ENCODE measurements at regions of chr2 and their contacts with region 1.

Region 1: DNA sequence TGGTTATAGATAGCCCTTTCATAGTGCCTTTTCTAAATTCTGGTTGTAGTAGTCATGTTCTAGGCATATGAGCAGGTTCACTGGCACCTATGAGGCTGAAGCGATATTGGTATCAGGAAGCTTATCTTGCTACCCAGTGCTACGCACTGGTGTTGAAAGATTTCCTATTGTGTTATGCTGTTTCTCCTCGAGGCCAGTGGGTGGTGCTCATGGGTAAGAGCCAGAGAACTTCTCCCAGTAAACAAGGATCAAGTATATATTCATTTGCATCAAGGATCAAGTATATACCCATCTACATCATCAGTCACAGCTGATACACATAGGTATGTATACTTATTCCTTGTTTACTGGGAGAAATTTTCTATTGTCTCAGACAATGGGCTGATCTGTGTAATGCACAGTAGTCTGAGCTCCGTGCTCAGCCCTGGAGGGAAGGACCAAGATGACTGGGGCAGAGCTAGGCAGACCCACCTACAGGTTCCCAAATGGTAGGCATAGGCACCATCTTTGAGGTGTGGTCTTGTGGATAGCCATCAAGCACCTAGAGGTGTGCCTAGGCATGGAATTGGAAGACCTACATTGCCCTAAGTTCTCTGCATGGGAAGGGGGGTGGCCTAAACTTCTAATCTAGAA is 101.2 kb upstream of the GALNT13 start:
- DNase-seq: peak in 26 of 42 donors; percentile 6 to 77 (median 32)

Region 2: DNA sequence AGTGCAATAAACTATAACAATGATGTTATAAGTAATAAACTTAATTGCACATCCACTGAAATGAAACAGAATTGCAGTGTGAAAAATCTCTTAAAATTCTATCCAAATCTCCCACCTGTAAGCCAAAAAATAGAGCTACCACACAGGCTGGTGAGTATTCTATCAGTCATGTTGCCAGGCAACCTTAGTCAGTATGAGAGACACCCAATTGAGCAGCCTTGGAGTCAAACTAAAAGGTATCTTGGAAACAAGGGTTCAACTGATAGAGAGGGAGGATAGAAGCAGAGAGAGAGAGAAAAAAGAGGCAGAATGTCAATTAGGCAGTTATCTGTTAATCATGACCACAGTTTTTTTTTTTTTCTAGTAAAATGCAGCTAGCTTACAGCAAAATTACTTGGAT is 147.1 kb after region 1 on chr2:
- intact Hi-C with region 1: no loop called
- DNase-seq: peak in 12 of 42 donors; percentile 5 to 69 (median 26)

Region 3: DNA sequence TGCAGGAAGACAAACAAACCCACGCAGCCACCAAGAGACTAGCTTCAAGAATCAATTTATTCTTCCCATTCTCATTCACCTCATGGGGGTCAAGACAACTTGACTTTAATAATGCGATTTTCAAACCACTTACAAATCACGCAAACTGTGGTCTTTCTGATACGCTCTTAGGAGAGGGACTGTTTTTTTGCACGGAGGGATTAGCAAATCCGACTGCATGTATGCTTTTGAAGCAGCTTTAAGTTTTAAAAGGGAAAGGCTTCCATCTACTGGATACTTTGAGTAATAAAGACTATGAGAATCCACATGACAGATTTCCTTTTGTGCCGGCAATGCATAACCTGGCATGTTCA is 605.1 kb after region 1 on chr2:
- intact Hi-C with region 1: loop called (anchors 10 kb)
- DNase-seq: peak in 15 of 42 donors; percentile 3 to 58 (median 15)

Measured in head of caudate nucleus (tissue), 42 donors.